PC-3 (cell line): ENCODE measurements at regions of chr1 and their contacts with region 1.

Region 1: GRCh38 chr1:80534606-80535360 is 1266.0 kb upstream of the ADGRL2 start:
- DNase-seq: peak; percentile 11
- ATAC-seq: peak; percentile 50
- H3K4me3 ChIP-seq: no peak overlapping the region
- H3K27ac ChIP-seq: no peak overlapping the region
- H3K4me1 ChIP-seq: no peaks in the 10 kb centered on the region; the same call in 1 of the 2 replicates
- H3K27me3 ChIP-seq: no peaks in the 10 kb centered on the region
- CTCF ChIP-seq: no peak

Region 2: GRCh38 chr1:80495806-80496205 is 39.0 kb before region 1 on chr1:
- CTCF ChIA-PET with region 1: no interaction called
- POLR2A ChIA-PET with region 1: no interaction called
- intact Hi-C with region 1: no loop called
- DNase-seq: no peak
- ATAC-seq: no peak
- H3K4me3 ChIP-seq: no peak overlapping the region
- H3K27ac ChIP-seq: no peak overlapping the region
- H3K4me1 ChIP-seq: no peaks in the 10 kb centered on the region
- H3K27me3 ChIP-seq: no peaks in the 10 kb centered on the region
- CTCF ChIP-seq: no peak

Region 3: DNA sequence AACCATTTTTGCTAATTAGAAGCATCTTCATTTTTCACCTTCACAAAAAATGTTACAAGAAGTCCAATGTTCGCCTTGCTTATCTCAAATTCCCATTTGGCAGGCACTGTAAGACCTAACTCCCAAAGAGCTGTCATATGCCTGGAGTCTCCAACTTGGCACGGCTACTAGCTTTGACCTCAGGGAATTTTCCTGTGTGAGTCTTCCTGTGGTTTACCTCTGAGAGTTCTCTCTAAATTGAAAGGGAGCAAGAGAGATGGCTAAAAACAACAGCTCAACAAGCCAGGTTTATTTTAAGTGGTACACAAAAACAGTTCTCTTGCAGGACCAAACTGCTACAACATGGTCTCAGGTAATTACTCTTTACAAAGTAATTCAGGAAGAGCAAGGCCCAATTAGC is 509.9 kb after region 1 on chr1:
- CTCF ChIA-PET with region 1: no interaction called
- POLR2A ChIA-PET with region 1: no interaction called
- intact Hi-C with region 1: no loop called
- DNase-seq: no peak
- ATAC-seq: no peak
- H3K4me3 ChIP-seq: no peak overlapping the region
- H3K27ac ChIP-seq: no peak overlapping the region
- H3K4me1 ChIP-seq: no peaks in the 10 kb centered on the region
- H3K27me3 ChIP-seq: no peaks in the 10 kb centered on the region
- CTCF ChIP-seq: no peak

Region 4: GRCh38 chr1:81238129-81238528 is 703.3 kb after region 1 on chr1:
- CTCF ChIA-PET with region 1: interaction called, 15 read pairs
- POLR2A ChIA-PET with region 1: no interaction called
- intact Hi-C with region 1: no loop called
- DNase-seq: no peak
- ATAC-seq: no peak
- H3K4me3 ChIP-seq: peak overlapping the region; percentile 26
- H3K27ac ChIP-seq: no peak overlapping the region
- H3K4me1 ChIP-seq: no peaks in the 10 kb centered on the region
- H3K27me3 ChIP-seq: peaks cover 47% of the 10 kb centered on the region
- CTCF ChIP-seq: no peak